HepG2 (cell line): ENCODE measurements at regions of chr19 and their contacts with region 1.

Region 1: DNA sequence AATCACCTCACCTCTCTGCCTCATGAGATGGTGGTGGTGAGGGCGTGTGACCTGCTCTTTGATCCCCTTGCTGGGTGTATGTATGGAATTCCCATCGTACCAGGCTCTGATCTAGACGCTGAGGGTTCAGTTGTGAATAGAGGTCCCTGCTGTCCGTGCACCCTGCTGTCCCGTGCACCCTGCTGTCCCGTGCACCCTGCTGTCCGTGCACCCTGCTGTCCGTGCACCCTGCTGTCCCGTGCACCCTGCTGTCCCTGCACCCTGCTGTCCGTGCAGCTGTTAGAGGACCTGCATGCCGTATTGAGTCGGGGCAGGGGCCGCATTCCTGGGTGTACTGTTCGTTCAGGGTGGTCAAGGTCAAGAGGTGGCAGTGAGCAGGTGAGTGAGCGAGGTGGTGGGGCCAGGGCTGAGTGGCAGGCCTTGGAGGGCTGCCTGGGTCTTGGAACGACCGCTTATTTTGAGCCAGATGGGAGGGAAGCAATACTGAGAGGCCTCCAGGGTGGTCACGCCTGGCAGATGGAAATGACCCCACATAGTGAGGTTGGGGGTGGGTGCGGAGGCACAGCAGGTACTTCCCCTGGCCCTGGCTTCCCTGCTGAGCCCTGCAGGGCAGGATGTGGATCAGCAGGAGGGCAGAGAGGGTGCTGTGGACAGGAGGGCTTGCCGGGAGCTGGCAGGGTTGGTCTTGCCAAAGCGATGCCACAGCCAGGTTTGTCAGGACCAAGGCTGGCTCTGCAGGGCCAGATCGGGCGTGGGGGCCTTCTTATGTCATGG is 4.6 kb upstream of the EPN1 start:
- DNase-seq: no peak
- ATAC-seq: peak; percentile 20; the same call in 2 of the 3 replicates
- H3K4me3 ChIP-seq: no peak overlapping the region
- H3K27ac ChIP-seq: no peak overlapping the region
- H3K4me1 ChIP-seq: peaks cover 23% of the 10 kb centered on the region
- H3K27me3 ChIP-seq: no peaks in the 10 kb centered on the region; a peak in 1 of 5 replicates
- CTCF ChIP-seq: no peak
- EP300 ChIP-seq: no peak
- POLR2A ChIP-seq: peak in 1 of 2 experiments; percentile 34; a peak in 2 of 4 replicates
- RAD21 ChIP-seq: no peak

Region 2: GRCh38 chr19:55683449-55684261 is 13.2 kb after region 1 on chr19:
- CTCF ChIA-PET with region 1: no interaction called
- POLR2A ChIA-PET with region 1: interaction called, 10 read pairs
- in situ Hi-C with region 1: no loop called
- intact Hi-C with region 1: no loop called
- DNase-seq: peak; percentile 90
- ATAC-seq: peak; percentile 94
- H3K4me3 ChIP-seq: peak overlapping the region; percentile 30 to 61 (median 35)
- H3K27ac ChIP-seq: peak overlapping the region; percentile 89
- H3K4me1 ChIP-seq: peaks cover 74% of the 10 kb centered on the region
- H3K27me3 ChIP-seq: no peaks in the 10 kb centered on the region
- CTCF ChIP-seq: no peak
- EP300 ChIP-seq: peak in 1 of 2 experiments; percentile 27; a peak in 1 of 4 replicates
- POLR2A ChIP-seq: peak; percentile 66 to 85
- RAD21 ChIP-seq: no peak

Region 3: GRCh38 chr19:55958356-55958755 is 287.9 kb after region 1 on chr19:
- CTCF ChIA-PET with region 1: no interaction called
- POLR2A ChIA-PET with region 1: no interaction called
- in situ Hi-C with region 1: no loop called
- intact Hi-C with region 1: no loop called
- DNase-seq: peak; percentile 2
- ATAC-seq: no peak
- H3K4me3 ChIP-seq: no peak overlapping the region
- H3K27ac ChIP-seq: no peak overlapping the region
- H3K4me1 ChIP-seq: no peaks in the 10 kb centered on the region
- H3K27me3 ChIP-seq: peaks cover 2 to 36% of the 10 kb centered on the region in 2 experiments; a peak in 3 of 5 replicates
- CTCF ChIP-seq: no peak
- EP300 ChIP-seq: no peak
- POLR2A ChIP-seq: no peak
- RAD21 ChIP-seq: no peak